ENCODE measurements at regions of chr19 and their contacts with region 1.

Region 1: DNA sequence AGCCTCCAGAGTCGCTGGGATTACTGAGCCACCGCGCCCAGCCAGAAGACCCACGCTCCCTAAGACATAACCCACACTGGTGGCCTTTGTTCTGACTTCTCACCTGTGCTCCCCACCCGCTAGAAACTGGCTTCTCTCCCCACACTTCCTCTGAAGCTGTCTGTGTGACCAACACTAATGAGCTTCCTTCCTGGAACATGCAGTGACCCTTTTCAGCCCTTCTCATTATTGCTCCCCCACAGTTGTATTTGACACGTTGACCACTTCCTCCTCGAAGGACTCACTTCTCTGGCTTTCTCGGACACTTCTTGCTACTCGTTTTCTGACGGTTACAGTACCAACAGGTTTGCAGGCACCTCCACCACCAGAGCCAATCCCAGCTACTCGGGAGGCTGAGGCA is 10.9 kb downstream of the NCR1 start:
- DNase-seq: no peak
- H3K4me3 ChIP-seq: no peak overlapping the region
- H3K4me3 Mint-ChIP-seq: no peak overlapping the region
- H3K27ac Mint-ChIP-seq: no peak overlapping the region
- H3K4me1 ChIP-seq: no peaks in the 10 kb centered on the region
- H3K4me1 Mint-ChIP-seq: no peaks in the 10 kb centered on the region
- H3K27me3 ChIP-seq: no peaks in the 10 kb centered on the region
- H3K27me3 Mint-ChIP-seq: no peaks in the 10 kb centered on the region
- CTCF ChIP-seq: no peak

Region 2: DNA sequence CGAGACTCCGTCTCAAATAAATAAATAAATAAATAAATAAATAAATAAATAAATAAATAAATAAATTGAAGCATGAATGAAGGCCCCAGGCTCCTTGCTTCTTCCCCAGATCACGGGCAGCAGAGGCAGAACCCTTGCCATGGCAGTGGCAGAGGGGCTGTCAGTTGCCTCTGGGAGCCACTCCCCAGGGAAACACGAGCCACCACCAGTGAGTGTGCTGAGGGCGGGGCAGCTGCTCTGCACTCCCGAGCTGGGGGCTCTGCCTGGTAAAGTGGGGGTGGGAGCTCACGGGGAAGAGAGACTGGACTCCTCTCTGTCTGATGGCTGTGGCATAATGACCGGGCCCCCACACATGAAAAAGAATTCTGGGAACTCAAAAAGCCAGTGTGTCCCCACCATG is 35.0 kb before region 1 on chr19:
- CTCF ChIA-PET with region 1: interaction called, 10 read pairs
- POLR2A ChIA-PET with region 1: no interaction called
- intact Hi-C with region 1: loop called (anchors 1 kb)
- DNase-seq: no peak
- H3K4me3 ChIP-seq: no peak overlapping the region
- H3K4me3 Mint-ChIP-seq: no peak overlapping the region
- H3K27ac Mint-ChIP-seq: no peak overlapping the region
- H3K4me1 ChIP-seq: no peaks in the 10 kb centered on the region
- H3K4me1 Mint-ChIP-seq: no peaks in the 10 kb centered on the region
- H3K27me3 ChIP-seq: no peaks in the 10 kb centered on the region
- H3K27me3 Mint-ChIP-seq: peaks cover 16% of the 10 kb centered on the region
- CTCF ChIP-seq: no peak

Region 3: GRCh38 chr19:54905421-54905802 is 11.4 kb before region 1 on chr19:
- CTCF ChIA-PET with region 1: no interaction called
- POLR2A ChIA-PET with region 1: no interaction called
- intact Hi-C with region 1: no loop called
- DNase-seq: no peak
- H3K4me3 ChIP-seq: no peak overlapping the region
- H3K4me3 Mint-ChIP-seq: no peak overlapping the region
- H3K27ac Mint-ChIP-seq: no peak overlapping the region
- H3K4me1 ChIP-seq: no peaks in the 10 kb centered on the region
- H3K4me1 Mint-ChIP-seq: peaks cover under 1% of the 10 kb centered on the region
- H3K27me3 ChIP-seq: no peaks in the 10 kb centered on the region
- H3K27me3 Mint-ChIP-seq: no peaks in the 10 kb centered on the region
- CTCF ChIP-seq: no peak

Region 4: DNA sequence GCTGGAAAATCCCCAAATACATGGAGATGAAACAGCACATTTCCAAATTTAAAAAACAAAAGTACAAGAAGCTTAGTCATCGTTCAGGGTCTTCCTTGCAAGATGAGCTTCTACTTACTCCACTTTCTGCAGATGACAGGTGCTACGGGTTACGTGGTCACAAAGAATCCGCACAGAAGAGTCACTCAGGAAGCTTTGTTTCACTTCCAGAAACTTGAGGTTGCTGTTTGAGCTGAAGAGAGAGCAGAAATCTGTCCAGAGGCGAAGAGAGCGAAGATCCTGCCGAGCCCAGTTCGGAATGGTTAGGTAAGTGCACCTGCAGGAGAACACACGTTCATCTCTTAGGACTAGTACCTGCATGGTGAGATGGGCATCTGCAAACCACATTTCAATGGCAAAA is 21.1 kb after region 1 on chr19:
- CTCF ChIA-PET with region 1: no interaction called
- POLR2A ChIA-PET with region 1: interaction called, 10 read pairs
- intact Hi-C with region 1: no loop called
- DNase-seq: no peak
- H3K4me3 ChIP-seq: no peak overlapping the region
- H3K4me3 Mint-ChIP-seq: no peak overlapping the region
- H3K27ac Mint-ChIP-seq: no peak overlapping the region
- H3K4me1 ChIP-seq: no peaks in the 10 kb centered on the region
- H3K4me1 Mint-ChIP-seq: no peaks in the 10 kb centered on the region
- H3K27me3 ChIP-seq: no peaks in the 10 kb centered on the region
- H3K27me3 Mint-ChIP-seq: peaks cover 3% of the 10 kb centered on the region
- CTCF ChIP-seq: no peak